HepG2 (cell line): ENCODE measurements at regions of chr19 and their contacts with region 1.

Region 1: DNA sequence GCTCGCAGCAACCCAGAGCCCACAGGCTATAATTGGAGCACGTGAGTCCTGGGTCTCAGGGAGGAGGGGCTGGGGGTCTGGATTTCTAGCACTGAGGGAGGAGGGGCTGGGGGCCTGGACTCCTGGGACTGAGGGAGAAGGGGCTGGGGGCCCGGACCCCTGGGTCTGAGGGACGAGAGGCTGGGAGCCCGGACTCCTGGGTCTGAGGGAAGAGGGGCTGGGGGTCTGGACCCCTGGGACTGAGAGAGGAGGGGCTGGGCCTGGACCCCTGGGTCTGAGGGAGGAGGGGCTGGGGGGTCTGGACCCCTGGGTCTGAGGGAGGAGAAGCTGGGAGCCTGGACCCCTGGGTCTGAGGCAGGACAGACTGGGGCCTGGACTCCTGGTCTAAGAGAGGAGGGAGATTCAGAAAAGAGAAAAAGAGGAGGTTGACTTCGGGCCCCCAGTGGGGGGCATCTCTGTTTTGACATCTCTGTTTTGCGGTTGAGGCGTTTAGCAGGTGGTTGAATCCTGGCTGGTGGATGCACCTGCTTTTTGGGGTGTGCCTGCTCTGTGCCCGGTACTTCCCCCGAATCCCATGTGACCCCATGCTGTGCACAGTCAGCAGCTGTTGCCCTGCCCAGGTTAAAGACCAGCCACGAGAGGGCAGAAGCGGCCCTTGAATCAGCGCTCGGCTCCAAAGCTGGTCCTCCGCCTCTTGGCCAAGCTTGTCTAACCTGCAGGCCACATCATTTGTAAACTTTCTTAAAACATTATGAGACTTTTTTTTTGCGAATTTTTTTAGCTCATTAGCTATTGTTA is 10.5 kb downstream of the PVR start:
- DNase-seq: peak; percentile 36
- ATAC-seq: peak; percentile 75
- H3K4me3 ChIP-seq: no peak overlapping the region
- H3K27ac ChIP-seq: no peak overlapping the region
- H3K4me1 ChIP-seq: no peaks in the 10 kb centered on the region
- H3K27me3 ChIP-seq: no peaks in the 10 kb centered on the region
- CTCF ChIP-seq: peak; percentile 80
- EP300 ChIP-seq: no peak
- POLR2A ChIP-seq: no peak
- RAD21 ChIP-seq: peak; percentile 50; the same call in 1 of the 2 replicates

Region 2: DNA sequence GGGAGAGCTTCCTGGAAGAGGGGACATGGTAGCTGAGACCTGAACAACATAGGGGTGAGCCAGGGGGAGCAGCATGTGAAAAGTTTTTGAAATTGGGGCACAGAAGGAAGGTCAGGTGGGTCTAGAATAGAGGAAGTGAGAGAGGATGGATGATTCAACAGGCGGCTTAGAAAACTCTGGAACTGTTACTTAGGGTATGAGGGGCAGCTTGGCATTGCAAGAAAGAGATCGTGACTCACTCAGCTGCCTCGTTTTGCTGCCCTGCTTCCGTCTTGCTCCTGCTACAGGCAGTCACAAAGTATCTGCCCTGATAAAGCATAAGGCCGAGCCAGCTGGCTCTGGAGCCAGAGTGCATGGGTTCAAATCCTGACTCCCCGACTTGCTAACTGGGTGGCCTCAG is 123.4 kb before region 1 on chr19:
- CTCF ChIA-PET with region 1: no interaction called
- POLR2A ChIA-PET with region 1: no interaction called
- in situ Hi-C with region 1: no loop called
- intact Hi-C with region 1: no loop called
- DNase-seq: no peak
- ATAC-seq: no peak
- H3K4me3 ChIP-seq: no peak overlapping the region
- H3K27ac ChIP-seq: no peak overlapping the region
- H3K4me1 ChIP-seq: peaks cover 13% of the 10 kb centered on the region
- H3K27me3 ChIP-seq: peaks cover 0 to 4% of the 10 kb centered on the region in 2 experiments; a peak in 1 of 5 replicates
- CTCF ChIP-seq: no peak
- EP300 ChIP-seq: no peak
- POLR2A ChIP-seq: no peak
- RAD21 ChIP-seq: no peak

Region 3: GRCh38 chr19:44576843-44577565 is 77.2 kb before region 1 on chr19:
- CTCF ChIA-PET with region 1: interaction called, 45 read pairs
- POLR2A ChIA-PET with region 1: interaction called, 22 read pairs
- in situ Hi-C with region 1: loop called (anchors 5 kb)
- intact Hi-C with region 1: loop called (anchors 1 kb)
- DNase-seq: peak; percentile 65
- ATAC-seq: peak; percentile 87
- H3K4me3 ChIP-seq: no peak overlapping the region
- H3K27ac ChIP-seq: no peak overlapping the region
- H3K4me1 ChIP-seq: peaks cover 28% of the 10 kb centered on the region
- H3K27me3 ChIP-seq: no peaks in the 10 kb centered on the region
- CTCF ChIP-seq: peak; percentile 90
- EP300 ChIP-seq: no peak
- POLR2A ChIP-seq: no peak
- RAD21 ChIP-seq: peak; percentile 82